Activated T-helper 1 cell treated with anti-CD3 and anti-CD28 coated beads, Interleukin-12 subunit alpha, Interleukin-12 subunit beta, Interleukin-2, Interleukin-4 antibody, amounts not matched to agents 30 ng/mL and 10 ng/mL and 1 ng/mL, durations not matched to agents 14 hours and 24 hours and 36 hours (primary cell): ENCODE measurements at regions of chr17 and their contacts with region 1.

Region 1: DNA sequence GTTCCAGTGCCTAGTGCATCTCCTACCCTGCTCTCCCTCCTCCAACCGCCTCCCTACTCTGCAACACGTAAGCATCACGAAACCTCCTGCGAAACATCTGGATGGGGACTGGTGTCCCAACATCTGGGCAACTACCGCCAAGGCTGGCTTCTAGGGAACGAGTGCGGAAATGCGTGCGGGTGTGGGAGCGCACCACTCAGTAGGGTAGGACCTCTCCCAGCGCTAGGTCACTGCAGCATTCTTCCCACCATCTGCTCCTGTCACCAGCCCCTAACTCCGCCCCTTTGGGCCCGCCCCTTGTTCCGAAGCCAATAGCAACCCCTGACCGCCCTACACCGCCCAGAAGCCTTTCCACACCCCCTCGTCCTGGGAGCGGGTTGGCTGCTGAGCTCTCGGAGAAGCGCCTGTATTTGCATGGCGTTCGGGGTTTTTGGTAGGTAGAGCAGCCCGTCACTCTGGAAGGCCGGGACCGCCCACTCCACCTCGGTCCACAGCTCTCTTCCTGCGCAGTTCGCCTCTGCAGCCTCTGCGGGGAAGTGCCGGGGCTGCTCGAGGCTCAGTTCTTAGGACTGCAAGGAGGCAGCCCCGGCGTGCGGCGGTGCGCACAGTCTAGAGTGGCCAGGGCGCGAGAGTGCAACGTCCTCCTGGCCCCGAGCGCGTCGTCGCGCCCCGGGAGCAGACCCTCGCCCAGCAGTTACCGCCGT is at the start of gene HS3ST3B1:
- DNase-seq: peak; percentile 100
- H3K4me3 Mint-ChIP-seq: peak within 1 kb of the TSS; percentile 93
- H3K27ac Mint-ChIP-seq: peak within 1 kb of the TSS; percentile 98
- H3K4me1 Mint-ChIP-seq: peaks cover 66% of the 10 kb centered on the region
- H3K27me3 Mint-ChIP-seq: peaks cover 20% of the 10 kb centered on the region
- total RNA-seq, gene HS3ST3B1: 32.3 and 33.8 TPM in 2 replicates

Region 2: GRCh38 chr17:13337864-13338371 is 962.8 kb before region 1 on chr17:
- intact Hi-C with region 1: loop called (anchors 10 kb)
- DNase-seq: no peak
- H3K4me3 Mint-ChIP-seq: no peak overlapping the region
- H3K27ac Mint-ChIP-seq: no peak overlapping the region
- H3K4me1 Mint-ChIP-seq: peaks cover 5% of the 10 kb centered on the region
- H3K27me3 Mint-ChIP-seq: peaks cover 9% of the 10 kb centered on the region

Region 3: DNA sequence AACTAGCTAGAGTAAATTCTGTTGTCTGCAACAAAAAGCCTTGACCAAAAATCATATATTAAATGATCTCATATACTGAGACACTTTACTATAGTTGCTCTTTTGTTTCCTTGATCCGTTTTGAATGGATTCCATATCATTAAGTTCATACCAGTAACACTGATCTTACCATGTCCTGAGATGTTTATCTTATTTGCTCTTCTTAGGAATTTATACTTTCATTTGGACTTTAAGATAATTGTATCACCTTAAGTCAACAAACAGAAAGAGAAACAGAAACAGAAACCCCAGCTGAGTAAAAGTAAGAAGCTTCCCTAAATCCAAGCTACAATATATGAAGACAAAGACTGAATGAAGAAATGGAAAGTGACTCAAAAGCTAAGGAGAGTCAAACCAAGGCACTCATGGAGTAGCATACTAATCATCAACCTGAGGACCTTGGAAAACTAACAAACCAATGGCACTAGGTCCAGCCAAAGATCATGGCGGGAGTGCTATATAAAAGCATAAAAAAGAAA is 337.9 kb before region 1 on chr17:
- intact Hi-C with region 1: loop called (anchors 2 kb)
- DNase-seq: no peak
- H3K4me3 Mint-ChIP-seq: peak overlapping the region; percentile 49
- H3K27ac Mint-ChIP-seq: peak overlapping the region; percentile 52
- H3K4me1 Mint-ChIP-seq: peaks cover 30% of the 10 kb centered on the region
- H3K27me3 Mint-ChIP-seq: no peaks in the 10 kb centered on the region

Region 4: DNA sequence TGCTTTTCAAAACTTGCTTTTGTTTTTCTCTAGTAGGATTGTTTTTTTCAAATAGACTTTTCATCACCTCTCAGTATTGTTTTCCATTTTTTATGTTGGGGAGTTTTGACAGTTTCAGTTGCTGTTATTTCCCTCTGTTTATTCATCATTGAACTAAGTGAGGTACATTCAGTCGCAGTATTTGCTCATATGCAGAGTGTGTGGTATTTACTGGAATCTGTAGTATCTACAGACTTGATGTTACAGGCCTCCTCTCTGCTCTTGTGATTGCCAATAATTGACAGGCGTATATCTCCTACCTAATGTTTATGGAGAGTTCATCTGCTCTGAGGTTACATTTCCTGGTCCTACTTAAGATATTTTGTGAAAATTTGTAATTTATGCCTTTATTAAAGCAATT is 181.8 kb before region 1 on chr17:
- intact Hi-C with region 1: loop called (anchors 1 kb)
- DNase-seq: peak; percentile 31
- H3K4me3 Mint-ChIP-seq: peak overlapping the region; percentile 55
- H3K27ac Mint-ChIP-seq: peak overlapping the region; percentile 94
- H3K4me1 Mint-ChIP-seq: peaks cover 96% of the 10 kb centered on the region
- H3K27me3 Mint-ChIP-seq: no peaks in the 10 kb centered on the region

Region 5: GRCh38 chr17:14427900-14428647 is 127.3 kb after region 1 on chr17:
- intact Hi-C with region 1: loop called (anchors 2 kb)
- DNase-seq: peak; percentile 54
- H3K4me3 Mint-ChIP-seq: peak overlapping the region; percentile 63
- H3K27ac Mint-ChIP-seq: peak overlapping the region; percentile 76
- H3K4me1 Mint-ChIP-seq: peaks cover 41% of the 10 kb centered on the region
- H3K27me3 Mint-ChIP-seq: peaks cover 3% of the 10 kb centered on the region